Posterior cingulate gyrus (tissue), 11 donors: ENCODE measurements at regions of chr7 and their contacts with region 1.

Region 1: DNA sequence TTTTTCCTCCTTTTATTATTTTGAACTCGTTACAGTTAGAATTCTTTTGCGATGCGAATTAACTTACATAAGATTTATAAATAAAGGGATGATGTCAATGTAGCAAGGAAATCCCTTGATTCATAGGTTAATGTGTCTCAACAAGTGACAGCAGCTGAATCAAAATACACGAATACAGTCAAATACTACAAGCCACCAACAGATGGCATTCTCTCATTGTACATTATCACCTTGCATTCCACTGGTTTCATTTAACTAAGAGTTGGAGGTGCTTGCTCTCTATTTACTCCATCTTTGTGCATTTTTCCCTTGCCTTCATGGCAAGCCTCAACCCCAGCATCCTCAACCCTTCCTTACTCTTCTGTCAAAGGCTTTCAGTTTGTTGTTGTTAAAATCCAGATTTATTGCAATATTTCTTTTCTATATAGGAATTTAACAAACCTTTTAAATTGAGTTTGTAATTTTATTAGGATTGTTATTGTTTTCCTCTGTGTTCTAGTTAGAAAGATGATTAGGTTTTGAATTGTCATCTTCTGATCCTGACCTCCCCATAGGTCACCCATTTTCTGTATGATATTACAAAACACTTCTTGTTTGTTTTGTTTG is 78.3 kb downstream of the SLC25A40 start:
- DNase-seq: no peak

Region 2: GRCh38 chr7:87518735-87519134 is 279.2 kb before region 1 on chr7:
- intact Hi-C with region 1: no loop called
- DNase-seq: no peak

Region 3: DNA sequence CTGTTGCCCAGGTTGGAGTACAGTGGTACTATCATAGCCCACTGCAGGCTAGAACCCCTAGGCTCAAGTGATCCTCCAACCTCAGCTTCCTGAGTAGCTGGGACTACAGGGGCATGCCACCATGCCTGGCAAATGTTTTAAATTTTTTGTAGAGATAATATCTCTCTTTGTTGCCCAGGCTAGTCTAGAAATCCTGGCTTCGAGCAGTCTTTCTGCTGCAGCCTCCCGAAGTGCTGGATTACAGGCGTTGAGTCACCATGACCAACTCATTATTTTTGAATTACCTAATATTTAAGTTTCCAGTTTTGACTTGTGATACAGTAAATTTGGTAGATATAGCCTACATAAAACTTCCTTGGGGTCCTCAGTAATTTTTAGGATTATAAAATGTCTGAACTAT is 95.6 kb before region 1 on chr7:
- intact Hi-C with region 1: no loop called
- DNase-seq: no peak

Region 4: GRCh38 chr7:88090671-88091070 is 292.8 kb after region 1 on chr7:
- intact Hi-C with region 1: no loop called
- DNase-seq: no peak

Region 5: GRCh38 chr7:88111136-88111743 is 313.3 kb after region 1 on chr7:
- intact Hi-C with region 1: loop called (anchors 5 kb)
- DNase-seq: no peak